ENCODE measurements at regions of chr14 and their contacts with region 1.

Region 1: GRCh38 chr14:65206448-65207096 is 104.3 kb upstream of the MAX start:
- DNase-seq: no peak
- ATAC-seq: peak; percentile 60
- H3K4me3 Mint-ChIP-seq: peak overlapping the region; percentile 76
- H3K27ac Mint-ChIP-seq: peak overlapping the region; percentile 96
- H3K4me1 Mint-ChIP-seq: peaks cover 89% of the 10 kb centered on the region
- H3K27me3 Mint-ChIP-seq: no peaks in the 10 kb centered on the region
- CTCF ChIP-seq: no peak

Region 2: GRCh38 chr14:64232095-64232838 is 974.3 kb before region 1 on chr14:
- CTCF ChIA-PET with region 1: no interaction called
- POLR2A ChIA-PET with region 1: no interaction called
- intact Hi-C with region 1: loop called (anchors 5 kb)
- DNase-seq: no peak
- ATAC-seq: peak; percentile 11
- H3K4me3 Mint-ChIP-seq: peak overlapping the region; percentile 53
- H3K27ac Mint-ChIP-seq: peak overlapping the region; percentile 97
- H3K4me1 Mint-ChIP-seq: peaks cover 61% of the 10 kb centered on the region
- H3K27me3 Mint-ChIP-seq: no peaks in the 10 kb centered on the region
- CTCF ChIP-seq: no peak

Region 3: DNA sequence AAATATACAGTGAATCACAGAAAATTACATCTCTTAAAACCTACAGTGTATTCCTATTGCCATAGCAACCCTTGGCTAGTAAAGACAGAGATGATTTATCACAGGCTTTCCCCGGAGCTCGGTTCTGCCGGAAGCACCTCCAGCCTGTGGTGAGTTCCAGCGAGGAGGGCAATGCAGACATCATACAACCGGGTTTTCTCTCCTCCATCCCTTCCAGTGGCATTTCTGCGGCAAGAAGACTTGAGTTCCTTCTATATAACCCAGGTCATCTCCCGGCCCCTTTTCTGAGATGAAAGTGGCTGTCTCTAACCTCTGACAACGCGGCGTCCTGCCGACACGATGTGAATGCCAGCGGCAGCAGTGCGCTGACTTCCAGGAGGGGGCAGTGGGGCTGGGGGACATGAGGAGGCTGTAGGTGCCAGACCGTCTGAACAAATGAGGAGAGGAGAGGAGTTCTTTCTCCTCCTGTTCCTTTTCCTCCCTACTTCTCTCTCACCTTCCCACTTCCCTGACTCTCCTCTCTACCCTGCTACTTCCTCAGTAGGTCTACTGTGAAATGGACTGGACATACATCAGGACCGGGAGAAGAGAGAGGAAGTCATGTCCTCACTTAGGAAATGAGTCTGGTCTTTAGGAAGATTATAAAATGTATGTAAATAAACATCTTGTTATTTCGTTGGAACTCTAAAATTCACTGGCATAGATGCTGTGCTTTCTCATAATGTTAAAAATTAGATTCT is 35.6 kb before region 1 on chr14:
- CTCF ChIA-PET with region 1: interaction called, 15 read pairs
- POLR2A ChIA-PET with region 1: interaction called, 171 read pairs
- intact Hi-C with region 1: loop called (anchors 1 kb)
- DNase-seq: peak; percentile 52
- ATAC-seq: peak; percentile 56
- H3K4me3 Mint-ChIP-seq: peak overlapping the region; percentile 87
- H3K27ac Mint-ChIP-seq: peak overlapping the region; percentile 85
- H3K4me1 Mint-ChIP-seq: peaks cover 52% of the 10 kb centered on the region
- H3K27me3 Mint-ChIP-seq: no peaks in the 10 kb centered on the region
- CTCF ChIP-seq: no peak

Region 4: GRCh38 chr14:65222440-65222858 is 15.9 kb after region 1 on chr14:
- CTCF ChIA-PET with region 1: interaction called, 5 read pairs
- POLR2A ChIA-PET with region 1: interaction called, 95 read pairs
- intact Hi-C with region 1: loop called (anchors 1 kb)
- DNase-seq: no peak
- ATAC-seq: peak; percentile 91
- H3K4me3 Mint-ChIP-seq: peak overlapping the region; percentile 11
- H3K27ac Mint-ChIP-seq: peak overlapping the region; percentile 18
- H3K4me1 Mint-ChIP-seq: peaks cover 62% of the 10 kb centered on the region
- H3K27me3 Mint-ChIP-seq: no peaks in the 10 kb centered on the region
- CTCF ChIP-seq: peak; percentile 58

Region 5: DNA sequence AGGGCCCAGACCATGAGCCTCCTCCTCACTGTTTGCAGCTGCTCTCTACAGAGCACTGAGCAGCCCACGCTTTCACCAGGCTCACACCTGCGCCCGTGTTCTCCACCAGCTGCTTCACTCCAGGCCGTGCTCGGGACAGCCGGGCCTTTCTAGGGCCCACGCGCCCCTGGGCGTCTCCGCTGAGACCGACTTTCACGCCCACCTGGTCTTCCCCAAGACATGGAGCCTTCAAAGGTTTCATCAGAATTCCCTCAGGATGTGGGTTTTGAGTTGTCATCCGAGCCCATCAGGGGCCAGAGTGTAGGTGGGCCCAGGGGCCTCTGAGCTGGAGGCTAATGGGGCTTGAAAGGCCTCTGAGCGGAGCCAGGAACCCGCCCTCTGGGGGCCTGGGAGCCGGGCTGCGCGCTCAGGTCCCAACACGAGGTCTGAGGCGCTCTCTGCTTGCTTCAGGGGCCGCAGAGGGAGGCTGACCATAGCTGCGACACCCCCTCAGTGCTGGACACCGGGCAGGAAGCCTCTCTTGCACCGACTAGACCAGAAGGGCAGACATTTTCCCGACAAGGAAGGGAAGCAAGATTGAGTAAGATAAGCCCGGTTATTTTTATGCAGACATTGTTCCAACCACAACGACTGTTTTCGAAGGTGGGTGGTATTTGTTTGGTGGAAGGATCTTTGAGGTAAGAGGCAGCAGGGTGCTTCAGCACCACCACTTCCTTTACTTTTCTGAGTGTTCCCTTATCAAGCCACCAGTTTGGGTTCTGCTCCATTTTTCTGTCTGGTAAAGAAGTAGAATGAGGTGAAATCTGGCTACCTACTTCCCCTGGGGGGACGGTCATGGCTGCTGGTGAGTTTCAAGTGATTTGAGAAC is 80.9 kb after region 1 on chr14:
- CTCF ChIA-PET with region 1: interaction called, 4 read pairs
- POLR2A ChIA-PET with region 1: interaction called, 45 read pairs
- intact Hi-C with region 1: loop called (anchors 1 kb)
- DNase-seq: peak; percentile 60
- ATAC-seq: peak; percentile 64
- H3K4me3 Mint-ChIP-seq: peak overlapping the region; percentile 74
- H3K27ac Mint-ChIP-seq: peak overlapping the region; percentile 96
- H3K4me1 Mint-ChIP-seq: peaks cover 89% of the 10 kb centered on the region
- H3K27me3 Mint-ChIP-seq: no peaks in the 10 kb centered on the region
- CTCF ChIP-seq: no peak

Region 6: DNA sequence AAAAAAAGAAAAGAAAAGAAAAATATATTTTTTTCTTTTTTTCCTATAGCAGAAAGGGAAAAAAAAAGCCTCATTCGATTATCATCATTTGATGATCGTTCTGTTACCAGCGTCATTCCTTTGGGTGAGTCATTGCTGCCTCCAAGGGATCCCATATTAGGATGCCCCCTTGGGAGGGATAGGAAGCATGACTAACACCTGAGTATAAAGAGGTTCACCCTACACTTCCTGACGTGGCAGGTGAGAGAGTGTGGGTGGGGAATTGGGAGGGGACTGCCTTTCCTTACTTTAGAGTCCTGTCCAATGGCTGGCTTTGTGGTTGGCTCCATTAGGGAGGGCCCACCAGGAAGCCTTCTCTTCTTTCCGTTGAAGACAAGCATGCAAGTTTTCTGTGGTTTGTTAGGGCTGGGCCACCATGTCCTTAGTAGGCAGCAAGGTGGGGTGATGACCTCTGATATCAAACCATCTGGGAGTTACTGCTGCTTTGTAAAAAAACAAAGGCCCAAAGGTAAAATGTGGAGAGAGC is 149.8 kb after region 1 on chr14:
- CTCF ChIA-PET with region 1: no interaction called
- POLR2A ChIA-PET with region 1: interaction called, 7 read pairs
- intact Hi-C with region 1: loop called (anchors 1 kb)
- DNase-seq: no peak
- ATAC-seq: no peak
- H3K4me3 Mint-ChIP-seq: no peak overlapping the region
- H3K27ac Mint-ChIP-seq: peak overlapping the region; percentile 71
- H3K4me1 Mint-ChIP-seq: peaks cover 87% of the 10 kb centered on the region
- H3K27me3 Mint-ChIP-seq: no peaks in the 10 kb centered on the region
- CTCF ChIP-seq: no peak

Region 7: GRCh38 chr14:65434214-65434850 is 227.8 kb after region 1 on chr14:
- CTCF ChIA-PET with region 1: no interaction called
- POLR2A ChIA-PET with region 1: no interaction called
- intact Hi-C with region 1: no loop called
- DNase-seq: no peak
- ATAC-seq: no peak
- H3K4me3 Mint-ChIP-seq: peak overlapping the region; percentile 13
- H3K27ac Mint-ChIP-seq: peak overlapping the region; percentile 54
- H3K4me1 Mint-ChIP-seq: peaks cover 68% of the 10 kb centered on the region
- H3K27me3 Mint-ChIP-seq: no peaks in the 10 kb centered on the region
- CTCF ChIP-seq: no peak